CD4-positive, alpha-beta T cell (primary cell): ENCODE measurements at regions of chr3 and their contacts with region 1.

Region 1: DNA sequence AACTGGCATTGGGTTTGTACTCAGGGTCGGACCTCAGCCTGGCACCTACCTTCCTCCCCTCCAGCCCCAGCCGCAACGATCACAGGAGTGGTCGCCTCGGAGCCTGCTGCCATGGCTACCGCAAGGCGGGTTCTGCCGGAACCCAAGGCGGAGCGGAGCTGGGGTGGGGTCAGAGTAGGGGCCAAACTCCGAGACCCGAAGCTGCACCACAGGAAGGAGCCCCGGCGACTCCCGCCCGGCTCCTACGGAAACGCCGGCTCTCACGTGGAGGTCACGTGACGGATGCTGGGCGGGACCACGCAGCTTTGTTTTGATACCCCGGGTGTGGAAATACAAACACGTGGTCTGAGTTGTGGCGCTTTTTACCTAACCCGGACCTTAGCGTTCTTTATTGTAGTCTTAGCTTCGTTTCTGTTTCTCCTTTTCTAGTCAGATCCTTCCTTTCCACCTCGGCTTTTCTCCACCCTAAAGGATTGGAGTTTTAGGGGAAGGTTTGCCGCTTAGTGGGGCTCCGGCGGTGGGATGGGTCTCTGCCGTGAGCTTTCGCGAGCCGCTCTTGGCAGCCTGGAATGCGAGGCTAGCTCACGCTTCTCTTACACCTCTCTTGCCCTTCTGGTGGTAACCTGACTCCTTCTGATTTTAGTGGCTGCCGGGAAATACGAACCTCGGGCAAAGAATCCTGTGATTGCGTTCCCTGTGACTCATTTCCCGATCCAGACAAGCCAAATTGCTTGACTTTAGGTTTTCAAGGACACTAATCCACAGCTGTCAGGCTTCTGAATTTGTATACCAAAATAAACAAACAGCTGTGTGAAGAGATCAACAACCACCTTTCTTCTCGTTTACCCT is at the start of gene HSPBAP1:
- DNase-seq: peak; percentile 76 to 95 (median 86)
- ATAC-seq: peak; percentile 69
- H3K4me3 ChIP-seq: peak within 1 kb of the TSS; percentile 68
- H3K4me3 Mint-ChIP-seq: no peak within 1 kb of the TSS
- H3K27ac ChIP-seq: peak within 1 kb of the TSS; percentile 75 to 84
- H3K27ac Mint-ChIP-seq: no peak within 1 kb of the TSS
- H3K4me1 ChIP-seq: peaks cover 37% of the 10 kb centered on the region
- H3K4me1 Mint-ChIP-seq: peaks cover 37% of the 10 kb centered on the region
- H3K27me3 ChIP-seq: no peaks in the 10 kb centered on the region
- H3K27me3 Mint-ChIP-seq: no peaks in the 10 kb centered on the region
- CTCF ChIP-seq: no peak
- total RNA-seq, gene HSPBAP1: 9.3 to 11.0 TPM

Region 2: GRCh38 chr3:121749276-121750086 is 1044.3 kb before region 1 on chr3 and contains the start of gene GOLGB1:
- CTCF ChIA-PET with region 1: no interaction called
- POLR2A ChIA-PET with region 1: no interaction called
- intact Hi-C with region 1: loop called in 1 of 2 experiments (anchors 10 kb)
- DNase-seq: peak; percentile 80 to 99 (median 86)
- ATAC-seq: peak; percentile 95
- H3K4me3 ChIP-seq: peak within 1 kb of the TSS; percentile 77
- H3K4me3 Mint-ChIP-seq: no peak within 1 kb of the TSS
- H3K27ac ChIP-seq: peak within 1 kb of the TSS; percentile 92 to 96
- H3K27ac Mint-ChIP-seq: no peak within 1 kb of the TSS
- H3K4me1 ChIP-seq: peaks cover 17% of the 10 kb centered on the region
- H3K4me1 Mint-ChIP-seq: peaks cover 5% of the 10 kb centered on the region
- H3K27me3 ChIP-seq: no peaks in the 10 kb centered on the region
- H3K27me3 Mint-ChIP-seq: peaks cover 12% of the 10 kb centered on the region
- CTCF ChIP-seq: no peak
- total RNA-seq, gene GOLGB1: 49.8 to 50.2 TPM

Region 3: DNA sequence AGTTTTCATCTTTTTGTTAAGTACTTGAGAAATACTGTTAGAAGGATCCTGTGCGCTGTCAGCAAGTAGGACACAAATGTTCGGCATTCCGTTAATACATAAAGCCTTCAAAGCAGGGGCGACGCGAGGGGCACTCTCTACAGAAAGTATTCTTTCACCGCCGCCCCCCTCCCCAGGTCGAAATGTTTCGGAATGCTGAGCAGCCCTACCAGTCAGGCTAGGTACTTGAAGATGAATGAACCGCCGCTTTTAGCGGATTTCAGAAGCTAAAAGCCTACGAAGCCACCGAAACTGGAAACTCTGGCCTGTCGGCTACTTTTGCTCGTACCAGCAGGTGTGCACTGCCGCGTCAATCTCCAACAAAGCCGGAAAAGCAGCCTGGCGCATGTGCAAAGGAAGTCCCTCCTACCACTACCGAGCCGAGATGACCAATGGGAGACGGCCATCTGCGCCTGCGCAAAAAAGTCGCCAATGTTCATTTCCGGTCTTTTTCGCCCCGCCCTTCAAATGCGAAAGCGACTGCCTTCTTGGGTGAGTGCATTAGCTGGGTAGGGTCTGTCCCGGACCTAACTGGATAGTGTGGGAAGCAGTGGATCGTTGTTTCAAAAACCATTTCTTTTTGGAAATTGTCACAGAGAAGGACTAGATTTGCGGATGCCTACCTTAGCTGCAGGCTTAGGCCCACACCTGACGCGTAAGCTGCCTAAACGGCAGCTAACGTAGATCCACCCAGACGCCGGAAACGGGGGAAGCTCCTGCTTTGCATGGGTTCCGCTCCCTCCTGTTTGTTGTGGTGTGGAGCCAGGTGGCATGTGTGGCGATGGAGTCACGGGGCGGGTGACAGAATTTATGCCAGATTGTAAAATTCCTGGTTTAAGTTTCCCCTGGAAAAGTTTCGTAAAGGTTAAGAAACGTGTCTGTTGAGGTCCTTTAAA is 377.8 kb before region 1 on chr3 and contains the start of gene WDR5B:
- CTCF ChIA-PET with region 1: no interaction called
- POLR2A ChIA-PET with region 1: interaction called, 12 read pairs
- intact Hi-C with region 1: loop called in 1 of 2 experiments (anchors 5 kb)
- DNase-seq: peak; percentile 96 to 99 (median 98)
- ATAC-seq: peak; percentile 87
- H3K4me3 ChIP-seq: peak within 1 kb of the TSS; percentile 76
- H3K4me3 Mint-ChIP-seq: peak within 1 kb of the TSS; percentile 97
- H3K27ac ChIP-seq: peak within 1 kb of the TSS; percentile 90 to 91
- H3K27ac Mint-ChIP-seq: peak within 1 kb of the TSS; percentile 100
- H3K4me1 ChIP-seq: peaks cover 22% of the 10 kb centered on the region
- H3K4me1 Mint-ChIP-seq: peaks cover 59% of the 10 kb centered on the region
- H3K27me3 ChIP-seq: no peaks in the 10 kb centered on the region
- H3K27me3 Mint-ChIP-seq: no peaks in the 10 kb centered on the region
- CTCF ChIP-seq: no peak
- total RNA-seq, gene WDR5B: 2.3 to 2.4 TPM

Region 4: GRCh38 chr3:122564155-122564912 is 229.5 kb before region 1 on chr3 and contains the starts of genes DTX3L and PARP9:
- CTCF ChIA-PET with region 1: no interaction called
- POLR2A ChIA-PET with region 1: interaction called, 9 read pairs
- intact Hi-C with region 1: loop called in 1 of 2 experiments (anchors 5 kb)
- DNase-seq: peak; percentile 47 to 95 (median 76)
- ATAC-seq: peak; percentile 91
- H3K4me3 ChIP-seq: peak within 1 kb of the TSS; percentile 92
- H3K4me3 Mint-ChIP-seq: peak within 1 kb of the TSS; percentile 95
- H3K27ac ChIP-seq: peak within 1 kb of the TSS; percentile 83 to 88
- H3K27ac Mint-ChIP-seq: peak within 1 kb of the TSS; percentile 89
- H3K4me1 ChIP-seq: peaks cover 67% of the 10 kb centered on the region
- H3K4me1 Mint-ChIP-seq: peaks cover 85% of the 10 kb centered on the region
- H3K27me3 ChIP-seq: no peaks in the 10 kb centered on the region
- H3K27me3 Mint-ChIP-seq: no peaks in the 10 kb centered on the region
- CTCF ChIP-seq: no peak
- total RNA-seq, gene DTX3L: 15.4 to 18.6 TPM
- total RNA-seq, gene PARP9: 13.2 to 14.4 TPM

Region 5: DNA sequence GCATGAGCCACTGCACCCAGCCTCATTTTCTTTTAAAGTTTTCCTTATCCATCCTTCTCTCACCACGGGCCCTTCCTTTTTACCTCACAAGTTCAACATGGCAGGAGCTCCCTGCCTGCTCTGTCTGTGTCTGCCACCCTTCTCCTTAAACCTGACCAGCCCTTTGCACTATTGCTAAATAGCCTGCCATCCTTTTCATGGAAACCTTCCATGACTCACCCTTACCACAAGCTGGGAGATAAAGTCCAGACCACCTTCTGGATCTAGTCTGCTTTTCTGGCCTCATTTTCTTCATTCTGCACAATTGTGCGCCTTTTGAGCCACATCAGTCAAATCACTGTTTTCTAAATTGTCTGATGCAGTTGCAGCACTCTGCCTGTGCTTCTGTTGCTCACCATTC is 104.2 kb before region 1 on chr3:
- CTCF ChIA-PET with region 1: no interaction called
- POLR2A ChIA-PET with region 1: interaction called, 5 read pairs
- intact Hi-C with region 1: loop called in 1 of 2 experiments (anchors 5 kb)
- DNase-seq: no peak
- ATAC-seq: no peak
- H3K4me3 ChIP-seq: no peak overlapping the region
- H3K4me3 Mint-ChIP-seq: no peak overlapping the region
- H3K27ac ChIP-seq: no peak overlapping the region
- H3K27ac Mint-ChIP-seq: no peak overlapping the region
- H3K4me1 ChIP-seq: peaks cover 7% of the 10 kb centered on the region
- H3K4me1 Mint-ChIP-seq: peaks cover 18% of the 10 kb centered on the region
- H3K27me3 ChIP-seq: no peaks in the 10 kb centered on the region
- H3K27me3 Mint-ChIP-seq: no peaks in the 10 kb centered on the region
- CTCF ChIP-seq: no peak

Region 6: DNA sequence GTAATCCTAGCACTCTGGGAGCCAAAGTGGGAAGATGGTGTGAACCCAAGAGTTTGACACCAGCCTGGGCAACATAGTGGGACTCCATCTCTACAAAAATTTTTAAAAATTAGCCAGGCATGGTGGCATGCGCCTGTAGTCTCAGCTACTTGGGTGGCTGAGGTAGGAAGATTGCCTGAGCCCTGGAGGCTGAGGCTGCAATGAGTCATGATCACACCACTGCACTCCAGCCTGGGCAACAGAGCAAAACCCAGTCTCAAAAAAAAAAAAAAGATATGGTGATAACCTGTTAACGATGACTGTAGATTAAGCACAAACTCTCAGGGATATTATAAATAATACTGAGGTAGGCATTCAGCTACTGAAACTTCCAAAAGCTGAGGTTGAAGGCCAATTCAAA is 108.5 kb after region 1 on chr3:
- CTCF ChIA-PET with region 1: no interaction called
- POLR2A ChIA-PET with region 1: no interaction called
- intact Hi-C with region 1: no loop called
- DNase-seq: no peak
- ATAC-seq: no peak
- H3K4me3 ChIP-seq: no peak overlapping the region
- H3K4me3 Mint-ChIP-seq: no peak overlapping the region
- H3K27ac ChIP-seq: no peak overlapping the region
- H3K27ac Mint-ChIP-seq: no peak overlapping the region
- H3K4me1 ChIP-seq: no peaks in the 10 kb centered on the region
- H3K4me1 Mint-ChIP-seq: no peaks in the 10 kb centered on the region
- H3K27me3 ChIP-seq: peaks cover 0 to 8% of the 10 kb centered on the region in 2 experiments
- H3K27me3 Mint-ChIP-seq: peaks cover 9% of the 10 kb centered on the region
- CTCF ChIP-seq: no peak

Region 7: DNA sequence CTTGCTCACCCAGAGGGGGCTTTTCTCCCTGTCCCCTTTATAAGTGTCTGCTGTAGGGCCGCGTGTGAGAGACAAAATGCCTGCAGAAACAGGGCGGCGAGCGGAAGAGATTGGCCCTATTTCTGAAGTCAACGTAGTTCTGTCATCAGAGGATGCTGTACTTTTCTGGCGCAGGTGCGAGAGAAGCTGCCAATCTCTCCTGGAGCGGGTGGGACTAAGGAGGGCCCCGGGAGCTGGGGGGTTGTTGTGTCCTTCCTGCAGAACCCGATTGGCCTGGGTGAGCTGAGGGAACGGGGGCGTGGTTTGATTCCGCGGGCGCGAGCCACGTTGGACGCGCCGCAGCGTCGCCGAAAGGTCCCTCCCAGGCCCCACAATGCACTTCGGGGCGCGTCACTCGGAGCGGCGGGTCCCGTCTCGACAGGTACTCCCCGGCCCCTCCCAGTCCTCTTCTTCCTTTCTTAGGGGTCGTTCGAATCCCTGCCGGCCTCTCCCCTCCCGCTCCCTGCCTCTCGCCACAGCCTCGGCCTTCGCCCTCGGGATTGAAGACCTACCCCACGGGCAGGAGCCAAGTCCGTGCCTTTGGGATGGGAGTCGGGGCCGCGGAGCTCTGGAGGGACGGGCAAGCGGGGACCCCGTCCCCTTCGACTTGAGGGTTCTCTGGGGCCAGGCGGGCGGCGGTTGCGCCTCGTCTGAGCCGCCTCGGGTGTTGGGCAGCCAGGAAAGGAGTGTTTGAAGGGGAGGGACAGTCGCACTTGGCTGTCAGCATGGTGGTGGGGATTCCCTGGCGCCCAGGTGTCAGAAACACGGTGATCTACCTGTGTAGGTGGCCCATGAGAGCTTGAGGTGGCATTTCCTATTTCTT is 408.0 kb after region 1 on chr3 and contains the start of gene SEC22A:
- CTCF ChIA-PET with region 1: no interaction called
- POLR2A ChIA-PET with region 1: interaction called, 11 read pairs
- intact Hi-C with region 1: loop called in 1 of 2 experiments (anchors 5 kb)
- DNase-seq: peak; percentile 88 to 99 (median 94)
- ATAC-seq: peak; percentile 95
- H3K4me3 ChIP-seq: peak within 1 kb of the TSS; percentile 88
- H3K4me3 Mint-ChIP-seq: peak within 1 kb of the TSS; percentile 89
- H3K27ac ChIP-seq: peak within 1 kb of the TSS; percentile 96 to 98
- H3K27ac Mint-ChIP-seq: peak within 1 kb of the TSS; percentile 98
- H3K4me1 ChIP-seq: peaks cover 20% of the 10 kb centered on the region
- H3K4me1 Mint-ChIP-seq: peaks cover 44% of the 10 kb centered on the region
- H3K27me3 ChIP-seq: no peaks in the 10 kb centered on the region
- H3K27me3 Mint-ChIP-seq: no peaks in the 10 kb centered on the region
- CTCF ChIP-seq: no peak
- total RNA-seq, gene SEC22A: 7.9 to 11.5 TPM